Esophagus squamous epithelium (tissue), 5 donors: ENCODE measurements at regions of chr9 and their contacts with region 1.

Region 1: DNA sequence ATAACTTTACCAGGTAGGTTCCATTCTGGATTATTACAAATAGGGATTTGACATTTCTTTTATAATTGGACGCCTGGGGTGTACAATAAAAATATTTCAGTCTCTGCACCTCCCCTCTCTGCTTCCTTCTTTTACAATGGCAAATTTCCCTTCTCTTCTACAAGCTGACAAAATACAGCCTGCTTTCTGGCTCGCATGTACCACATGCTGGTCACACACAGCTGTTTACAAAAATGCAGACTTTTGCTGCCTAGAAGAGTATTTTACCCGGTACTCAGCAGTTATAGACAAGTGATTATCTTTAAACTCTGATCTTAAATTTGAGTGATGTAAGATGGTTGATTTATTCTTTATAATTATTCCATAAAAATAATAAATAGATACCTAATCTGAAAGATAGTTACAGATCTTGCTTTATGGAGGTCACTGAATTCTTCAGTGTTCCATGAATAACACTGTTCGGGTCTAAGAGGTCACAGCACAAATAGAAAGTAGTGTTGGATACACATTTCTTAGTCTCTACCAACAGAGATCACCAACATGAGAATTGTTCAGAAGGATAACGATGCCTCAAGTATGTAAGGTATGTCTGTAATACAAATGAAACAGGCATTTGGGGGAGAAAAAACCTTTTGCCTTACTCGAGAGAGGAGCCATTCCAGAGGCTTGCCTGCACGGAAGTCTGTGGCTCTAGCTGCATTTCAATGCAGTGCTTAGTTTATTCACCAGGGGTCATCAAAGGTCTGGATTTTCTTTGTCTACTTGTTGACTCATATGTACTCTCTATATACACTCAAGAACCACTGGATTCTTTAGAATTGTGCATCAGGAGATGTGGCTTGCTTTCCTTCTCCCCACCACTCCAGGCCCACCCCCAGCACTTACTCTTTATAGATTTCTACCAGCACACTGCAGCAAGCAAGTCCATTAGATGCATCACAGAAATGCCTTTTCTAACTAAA is 206.6 kb upstream of the RFX3 start:
- DNase-seq: no peak
- H3K4me3 ChIP-seq: peak overlapping the region in 1 of 4 donors; percentile 38
- H3K27ac ChIP-seq: peak overlapping the region in 3 of 4 donors; percentile 14 to 35 (median 21)
- H3K4me1 ChIP-seq: peaks cover 0 to 14% (median 4%) of the 10 kb centered on the region in 3 donors
- H3K27me3 ChIP-seq: no peaks in the 10 kb centered on the region
- CTCF ChIP-seq: peak; percentile 46 to 92 (median 78)
- POLR2A ChIP-seq: no peak

Region 2: GRCh38 chr9:3541206-3541605 is 191.2 kb before region 1 on chr9:
- intact Hi-C with region 1: no loop called
- DNase-seq: no peak
- H3K4me3 ChIP-seq: no peak overlapping the region
- H3K27ac ChIP-seq: no peak overlapping the region
- H3K4me1 ChIP-seq: no peaks in the 10 kb centered on the region
- H3K27me3 ChIP-seq: no peaks in the 10 kb centered on the region
- CTCF ChIP-seq: no peak
- POLR2A ChIP-seq: no peak

Region 3: GRCh38 chr9:3777137-3777536 is 44.8 kb after region 1 on chr9:
- intact Hi-C with region 1: no loop called
- DNase-seq: no peak
- H3K4me3 ChIP-seq: no peak overlapping the region
- H3K27ac ChIP-seq: no peak overlapping the region
- H3K4me1 ChIP-seq: no peaks in the 10 kb centered on the region
- H3K27me3 ChIP-seq: no peaks in the 10 kb centered on the region
- CTCF ChIP-seq: no peak
- POLR2A ChIP-seq: no peak

Region 4: DNA sequence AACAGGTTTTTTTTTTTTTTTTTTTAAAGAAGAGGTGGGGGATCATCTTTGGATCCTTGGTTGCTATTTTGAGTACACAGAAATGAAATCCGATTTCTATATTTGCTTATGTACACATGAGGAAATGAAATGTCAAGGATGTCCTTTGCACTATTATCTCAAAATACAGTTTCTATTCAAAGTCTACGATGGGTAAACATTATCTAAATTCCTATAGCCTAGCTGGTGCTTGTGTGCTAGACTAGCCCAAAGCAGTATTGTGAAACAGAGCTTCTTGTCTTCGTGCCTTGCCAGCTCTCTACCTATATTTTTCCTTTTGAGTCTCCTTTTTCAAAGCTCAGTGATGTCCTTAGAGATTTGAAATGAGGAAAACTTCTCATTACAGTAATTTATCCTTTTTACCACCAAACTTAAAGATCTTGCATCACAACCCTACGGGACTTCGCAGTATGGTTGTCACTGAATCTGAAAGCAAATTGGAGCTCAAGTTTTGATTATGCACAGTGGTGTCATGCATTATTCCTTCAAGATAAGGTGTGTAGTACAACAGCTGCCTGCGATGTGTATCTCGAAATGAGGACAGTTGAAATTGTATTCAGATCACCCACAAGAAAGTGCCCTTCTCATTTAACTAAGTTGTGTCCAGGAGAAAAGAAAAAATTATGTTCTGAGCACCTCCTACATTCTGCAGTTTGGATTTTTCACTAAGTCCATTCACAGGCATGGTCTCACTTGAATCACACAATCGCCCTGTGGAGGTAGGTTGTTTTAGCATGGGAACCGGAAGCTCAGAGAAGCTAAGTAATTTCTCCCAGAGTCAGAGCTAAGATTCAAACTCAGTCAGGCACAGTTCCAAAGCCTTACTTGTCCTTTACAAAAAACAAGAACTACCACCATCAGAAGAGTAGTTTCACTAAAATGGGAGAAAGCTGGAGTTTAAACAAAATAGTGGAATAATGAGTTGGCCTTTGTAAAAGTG is 188.5 kb after region 1 on chr9:
- intact Hi-C with region 1: no loop called
- DNase-seq: no peak
- H3K4me3 ChIP-seq: no peak overlapping the region
- H3K27ac ChIP-seq: no peak overlapping the region
- H3K4me1 ChIP-seq: peaks cover 0 to 4% (median 0%) of the 10 kb centered on the region in 3 donors
- H3K27me3 ChIP-seq: no peaks in the 10 kb centered on the region
- CTCF ChIP-seq: no peak
- POLR2A ChIP-seq: no peak

Region 5: DNA sequence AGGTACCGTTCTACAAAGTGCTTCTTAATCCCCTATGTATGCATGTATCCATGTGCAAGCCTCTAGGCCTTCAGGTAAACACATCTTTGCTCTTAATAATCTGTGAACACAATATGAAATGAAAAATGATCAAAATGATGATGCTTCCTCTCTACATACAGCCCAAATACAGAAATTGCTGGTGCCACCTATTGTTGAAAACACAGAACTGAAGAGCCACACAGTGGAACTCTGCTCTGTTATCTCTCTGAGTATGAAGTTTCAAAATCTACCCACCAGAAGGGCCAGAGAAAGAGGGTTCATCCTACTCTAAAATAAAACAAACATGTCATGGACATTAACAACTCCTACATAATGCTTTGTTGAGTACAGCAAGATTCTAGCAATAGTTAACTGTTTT is 496.2 kb after region 1 on chr9:
- intact Hi-C with region 1: loop called (anchors 10 kb)
- DNase-seq: no peak
- H3K4me3 ChIP-seq: no peak overlapping the region
- H3K27ac ChIP-seq: no peak overlapping the region
- H3K4me1 ChIP-seq: no peaks in the 10 kb centered on the region
- H3K27me3 ChIP-seq: no peaks in the 10 kb centered on the region
- CTCF ChIP-seq: peak in 5 of 6 experiments; percentile 41 to 65 (median 48)
- POLR2A ChIP-seq: no peak